ENCODE measurements at regions of chr22 and their contacts with region 1.

Region 1: GRCh38 chr22:31211862-31212730 is at the start of gene LIMK2:
- DNase-seq: peak; percentile 98
- ATAC-seq: peak; percentile 100
- H3K4me3 Mint-ChIP-seq: peak within 1 kb of the TSS; percentile 90
- H3K27ac Mint-ChIP-seq: peak within 1 kb of the TSS; percentile 79
- H3K4me1 Mint-ChIP-seq: peaks cover 26% of the 10 kb centered on the region
- H3K27me3 Mint-ChIP-seq: no peaks in the 10 kb centered on the region
- CTCF ChIP-seq: peak; percentile 30
- total RNA-seq, gene LIMK2: 15.3 and 17.7 TPM in 2 replicates

Region 2: GRCh38 chr22:30968924-30969539 is 243.1 kb before region 1 on chr22 and contains the start of gene TUG1:
- CTCF ChIA-PET with region 1: interaction called, 3 read pairs
- POLR2A ChIA-PET with region 1: no interaction called
- intact Hi-C with region 1: loop called (anchors 1 kb)
- DNase-seq: peak; percentile 93
- ATAC-seq: peak; percentile 92
- H3K4me3 Mint-ChIP-seq: peak within 1 kb of the TSS; percentile 95
- H3K27ac Mint-ChIP-seq: peak within 1 kb of the TSS; percentile 94
- H3K4me1 Mint-ChIP-seq: peaks cover 56% of the 10 kb centered on the region
- H3K27me3 Mint-ChIP-seq: no peaks in the 10 kb centered on the region
- CTCF ChIP-seq: no peak
- total RNA-seq, gene TUG1: 70.4 and 83.0 TPM in 2 replicates

Region 3: DNA sequence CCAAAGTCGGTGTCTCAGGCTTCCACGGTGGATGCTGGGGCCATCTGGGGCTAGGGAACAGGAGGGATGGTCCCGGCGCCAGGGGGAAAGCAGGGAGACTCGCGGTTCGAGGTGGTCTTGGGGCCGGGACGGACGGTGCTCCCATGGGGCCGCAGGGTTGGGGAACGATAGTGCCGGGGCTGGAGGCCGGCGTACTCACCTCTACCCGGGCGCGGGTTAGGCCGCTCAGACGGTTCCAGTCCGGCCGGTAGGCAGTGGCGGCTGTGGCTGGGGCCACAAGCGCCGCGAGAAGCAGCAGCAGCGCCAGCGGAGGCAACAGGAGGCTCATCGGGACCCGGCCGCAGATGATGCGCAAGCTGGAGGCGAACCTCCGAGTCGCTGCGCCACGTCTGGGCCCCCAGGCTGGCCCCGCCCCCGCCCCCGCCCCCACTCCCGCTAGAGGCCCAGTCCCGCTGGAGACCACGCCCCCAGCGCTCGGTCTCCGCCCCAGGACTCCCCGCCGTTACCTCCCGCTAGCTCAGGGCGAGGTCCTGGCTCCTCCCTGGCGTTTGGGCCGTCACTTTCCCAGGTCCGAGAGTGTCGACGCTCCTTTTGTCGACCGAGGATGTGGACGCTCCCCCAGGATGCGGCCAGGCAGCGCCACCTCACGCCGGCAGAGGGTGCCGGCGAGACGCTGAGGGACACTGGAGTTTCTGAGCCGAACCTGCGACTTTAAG is 104.8 kb before region 1 on chr22 and contains the start of gene SELENOM:
- CTCF ChIA-PET with region 1: no interaction called
- POLR2A ChIA-PET with region 1: no interaction called
- intact Hi-C with region 1: loop called (anchors 5 kb)
- DNase-seq: peak; percentile 76
- ATAC-seq: peak; percentile 97
- H3K4me3 Mint-ChIP-seq: peak within 1 kb of the TSS; percentile 93
- H3K27ac Mint-ChIP-seq: peak within 1 kb of the TSS; percentile 80
- H3K4me1 Mint-ChIP-seq: peaks cover 23% of the 10 kb centered on the region
- H3K27me3 Mint-ChIP-seq: no peaks in the 10 kb centered on the region
- CTCF ChIP-seq: no peak
- total RNA-seq, gene SELENOM: 9.0 and 9.5 TPM in 2 replicates

Region 4: DNA sequence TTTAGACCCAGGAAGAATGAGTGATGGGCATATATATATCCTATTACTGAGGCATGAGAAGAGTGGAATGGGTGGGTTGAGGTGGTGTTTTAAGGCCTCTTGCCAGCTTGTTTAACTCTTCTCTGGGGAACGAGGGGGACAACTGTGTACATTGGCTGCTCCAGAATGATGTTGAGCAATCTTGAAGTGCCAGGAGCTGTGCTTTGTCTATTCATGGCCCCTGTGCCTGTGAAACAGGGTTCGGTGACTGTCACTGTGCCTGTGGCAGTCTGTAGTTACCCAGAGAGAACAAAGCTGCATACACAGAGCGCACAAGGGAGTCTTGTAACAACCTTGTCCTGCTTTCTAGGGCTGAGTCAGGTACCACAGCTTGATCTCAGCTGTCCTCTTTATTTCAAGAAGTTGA is 11.7 kb after region 1 on chr22:
- CTCF ChIA-PET with region 1: interaction called, 4 read pairs
- POLR2A ChIA-PET with region 1: interaction called, 3 read pairs
- intact Hi-C with region 1: loop called (anchors 1 kb)
- DNase-seq: no peak
- ATAC-seq: no peak
- H3K4me3 Mint-ChIP-seq: no peak overlapping the region
- H3K27ac Mint-ChIP-seq: no peak overlapping the region
- H3K4me1 Mint-ChIP-seq: peaks cover 32% of the 10 kb centered on the region
- H3K27me3 Mint-ChIP-seq: no peaks in the 10 kb centered on the region
- CTCF ChIP-seq: no peak

Region 5: DNA sequence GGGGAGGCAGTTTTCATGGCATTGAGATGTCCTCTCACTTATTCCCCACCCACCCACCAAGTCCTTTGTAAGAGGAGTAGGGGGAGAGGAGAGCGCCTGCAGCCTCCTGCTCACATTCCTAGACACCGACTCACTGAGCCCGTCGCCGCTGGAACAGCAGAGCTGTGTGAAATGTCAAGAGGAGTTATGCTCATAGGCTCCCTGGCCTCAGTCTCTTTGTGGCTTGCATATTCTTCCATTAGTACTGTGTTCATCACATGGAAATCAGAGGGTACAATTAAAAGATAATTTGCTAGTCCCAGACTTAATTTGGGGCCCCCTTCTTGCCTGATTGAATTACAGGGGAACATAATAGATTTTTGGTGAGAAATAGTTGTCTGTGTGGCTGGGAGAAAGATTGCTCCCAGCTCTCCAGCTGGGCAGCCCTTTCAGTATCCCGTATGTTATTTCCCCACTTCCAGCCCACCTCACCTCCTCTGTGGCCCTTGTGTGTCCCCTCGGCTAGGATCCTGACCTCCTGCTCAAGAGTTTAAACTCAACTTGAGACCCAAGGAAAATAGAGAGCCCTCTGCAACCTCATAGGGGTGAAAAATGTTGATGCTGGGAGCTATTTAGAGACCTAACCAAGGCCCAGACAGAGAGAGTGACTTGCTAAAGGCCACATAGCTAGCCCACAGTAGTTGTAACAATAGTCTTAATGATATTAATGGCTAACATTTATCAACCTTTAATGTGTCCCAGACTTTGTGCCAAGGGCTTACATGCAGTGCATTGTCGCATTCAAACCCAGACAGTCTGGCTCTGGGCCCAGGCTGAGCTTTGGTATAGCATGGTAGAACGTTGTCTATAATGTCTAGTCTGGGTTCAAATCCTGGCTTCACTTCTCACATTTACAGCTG is 32.2 kb after region 1 on chr22:
- CTCF ChIA-PET with region 1: no interaction called
- POLR2A ChIA-PET with region 1: no interaction called
- intact Hi-C with region 1: no loop called
- DNase-seq: no peak
- ATAC-seq: no peak
- H3K4me3 Mint-ChIP-seq: no peak overlapping the region
- H3K27ac Mint-ChIP-seq: no peak overlapping the region
- H3K4me1 Mint-ChIP-seq: peaks cover 6% of the 10 kb centered on the region
- H3K27me3 Mint-ChIP-seq: no peaks in the 10 kb centered on the region
- CTCF ChIP-seq: no peak

Region 6: DNA sequence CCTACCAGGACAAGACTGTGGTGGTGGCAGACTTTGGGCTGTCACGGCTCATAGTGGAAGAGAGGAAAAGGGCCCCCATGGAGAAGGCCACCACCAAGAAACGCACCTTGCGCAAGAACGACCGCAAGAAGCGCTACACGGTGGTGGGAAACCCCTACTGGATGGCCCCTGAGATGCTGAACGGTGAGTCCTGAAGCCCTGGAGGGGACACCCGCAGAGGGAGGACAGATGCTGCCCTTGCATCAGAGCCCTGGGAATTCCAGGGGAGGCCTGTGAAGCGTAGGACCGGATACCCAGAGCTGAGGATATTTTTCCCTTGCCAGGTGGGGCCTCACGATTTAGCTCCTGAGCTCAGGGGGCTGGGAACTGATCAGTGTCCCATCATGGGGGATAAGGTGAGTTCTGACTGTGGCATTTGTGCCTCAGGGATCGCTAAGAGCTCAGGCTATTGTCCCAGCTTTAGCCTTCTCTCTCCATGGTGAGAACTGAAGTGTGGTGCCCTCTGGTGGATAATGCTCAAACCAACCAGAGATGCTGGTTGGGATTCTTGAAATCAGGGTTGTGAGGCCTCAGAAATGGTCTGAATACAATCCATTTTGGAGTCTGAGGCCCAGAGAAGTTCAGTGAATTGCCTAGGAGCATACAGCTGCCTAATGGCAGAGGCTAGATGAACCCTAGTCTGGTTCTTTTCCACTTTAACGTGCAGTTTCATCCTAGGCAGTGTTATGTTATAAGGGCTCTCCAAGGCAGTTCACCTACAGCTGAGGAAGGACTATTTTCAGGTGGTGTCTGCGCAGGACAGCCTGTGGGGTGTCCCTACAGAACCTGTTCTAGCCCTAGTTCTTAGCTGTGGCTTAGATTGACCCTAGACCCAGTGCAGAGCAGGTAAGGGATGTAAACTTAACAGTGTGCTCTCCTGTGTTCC is 60.7 kb after region 1 on chr22:
- CTCF ChIA-PET with region 1: interaction called, 53 read pairs
- POLR2A ChIA-PET with region 1: interaction called, 4 read pairs
- intact Hi-C with region 1: loop called (anchors 1 kb)
- DNase-seq: no peak
- ATAC-seq: peak; percentile 64
- H3K4me3 Mint-ChIP-seq: no peak overlapping the region
- H3K27ac Mint-ChIP-seq: no peak overlapping the region
- H3K4me1 Mint-ChIP-seq: no peaks in the 10 kb centered on the region
- H3K27me3 Mint-ChIP-seq: no peaks in the 10 kb centered on the region
- CTCF ChIP-seq: peak; percentile 46

Region 7: GRCh38 chr22:31345331-31346254 is 133.5 kb after region 1 on chr22:
- CTCF ChIA-PET with region 1: no interaction called
- POLR2A ChIA-PET with region 1: interaction called, 6 read pairs
- intact Hi-C with region 1: loop called (anchors 1 kb)
- DNase-seq: peak; percentile 89
- ATAC-seq: peak; percentile 58
- H3K4me3 Mint-ChIP-seq: peak overlapping the region; percentile 83
- H3K27ac Mint-ChIP-seq: peak overlapping the region; percentile 80
- H3K4me1 Mint-ChIP-seq: peaks cover 50% of the 10 kb centered on the region
- H3K27me3 Mint-ChIP-seq: no peaks in the 10 kb centered on the region
- CTCF ChIP-seq: peak; percentile 56

Measured in activated B cell treated with CpG ODN at 0.5 μM for 24 hours (primary cell).